ENCODE measurements at regions of chr6 and their contacts with region 1.

Region 1: GRCh38 chr6:31769684-31770371 is 7.3 kb downstream of the VWA7 start:
- DNase-seq: peak; percentile 75 to 81 (median 80)
- H3K4me3 ChIP-seq: no peak overlapping the region
- H3K4me3 Mint-ChIP-seq: peak overlapping the region in 2 of 8 donors; percentile 42 to 57
- H3K27ac ChIP-seq: no peak overlapping the region
- H3K27ac Mint-ChIP-seq: peak overlapping the region in 5 of 7 donors; percentile 0 to 65 (median 36)
- H3K4me1 ChIP-seq: peaks cover 35% of the 10 kb centered on the region
- H3K4me1 Mint-ChIP-seq: peaks cover 15 to 34% (median 24%) of the 10 kb centered on the region in 4 donors
- H3K27me3 ChIP-seq: no peaks in the 10 kb centered on the region
- H3K27me3 Mint-ChIP-seq: no peaks in the 10 kb centered on the region

Region 2: DNA sequence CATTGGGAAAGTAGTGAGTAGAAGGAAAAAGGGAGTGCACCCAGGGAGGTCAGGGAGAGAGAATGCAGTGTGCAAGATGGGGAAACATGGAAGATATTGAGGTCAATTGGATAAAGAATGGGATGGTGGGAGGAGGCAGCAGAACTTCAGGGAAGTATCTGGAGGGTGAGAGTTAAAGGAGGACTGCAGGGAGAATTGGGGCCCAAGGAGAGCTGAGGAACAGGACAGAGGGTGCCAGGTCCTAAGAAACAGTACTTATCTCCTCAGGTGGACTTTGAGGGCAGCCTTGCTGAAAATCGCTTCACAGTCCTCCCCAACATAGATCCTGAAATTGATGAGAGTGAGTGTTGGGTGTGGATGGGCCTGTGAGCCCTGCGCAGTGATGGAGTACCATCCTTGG is 11.5 kb before region 1 on chr6:
- CTCF ChIA-PET with region 1: interaction called, 11 read pairs
- POLR2A ChIA-PET with region 1: no interaction called
- intact Hi-C with region 1: no loop called
- DNase-seq: no peak
- H3K4me3 ChIP-seq: no peak overlapping the region
- H3K4me3 Mint-ChIP-seq: no peak overlapping the region
- H3K27ac ChIP-seq: no peak overlapping the region
- H3K27ac Mint-ChIP-seq: peak overlapping the region in 3 of 7 donors; percentile 10 to 72 (median 38)
- H3K4me1 ChIP-seq: no peaks in the 10 kb centered on the region
- H3K4me1 Mint-ChIP-seq: peaks cover 0 to 5% (median 0%) of the 10 kb centered on the region in 4 donors
- H3K27me3 ChIP-seq: no peaks in the 10 kb centered on the region
- H3K27me3 Mint-ChIP-seq: no peaks in the 10 kb centered on the region

Region 3: GRCh38 chr6:31785475-31785874 is 15.6 kb after region 1 on chr6:
- CTCF ChIA-PET with region 1: interaction called, 17 read pairs
- POLR2A ChIA-PET with region 1: interaction called, 7 read pairs
- intact Hi-C with region 1: no loop called
- DNase-seq: no peak
- H3K4me3 ChIP-seq: no peak overlapping the region
- H3K4me3 Mint-ChIP-seq: no peak overlapping the region
- H3K27ac ChIP-seq: no peak overlapping the region
- H3K27ac Mint-ChIP-seq: no peak overlapping the region
- H3K4me1 ChIP-seq: no peaks in the 10 kb centered on the region
- H3K4me1 Mint-ChIP-seq: peaks cover 1 to 4% (median 3%) of the 10 kb centered on the region in 4 donors
- H3K27me3 ChIP-seq: no peaks in the 10 kb centered on the region
- H3K27me3 Mint-ChIP-seq: no peaks in the 10 kb centered on the region

Region 4: DNA sequence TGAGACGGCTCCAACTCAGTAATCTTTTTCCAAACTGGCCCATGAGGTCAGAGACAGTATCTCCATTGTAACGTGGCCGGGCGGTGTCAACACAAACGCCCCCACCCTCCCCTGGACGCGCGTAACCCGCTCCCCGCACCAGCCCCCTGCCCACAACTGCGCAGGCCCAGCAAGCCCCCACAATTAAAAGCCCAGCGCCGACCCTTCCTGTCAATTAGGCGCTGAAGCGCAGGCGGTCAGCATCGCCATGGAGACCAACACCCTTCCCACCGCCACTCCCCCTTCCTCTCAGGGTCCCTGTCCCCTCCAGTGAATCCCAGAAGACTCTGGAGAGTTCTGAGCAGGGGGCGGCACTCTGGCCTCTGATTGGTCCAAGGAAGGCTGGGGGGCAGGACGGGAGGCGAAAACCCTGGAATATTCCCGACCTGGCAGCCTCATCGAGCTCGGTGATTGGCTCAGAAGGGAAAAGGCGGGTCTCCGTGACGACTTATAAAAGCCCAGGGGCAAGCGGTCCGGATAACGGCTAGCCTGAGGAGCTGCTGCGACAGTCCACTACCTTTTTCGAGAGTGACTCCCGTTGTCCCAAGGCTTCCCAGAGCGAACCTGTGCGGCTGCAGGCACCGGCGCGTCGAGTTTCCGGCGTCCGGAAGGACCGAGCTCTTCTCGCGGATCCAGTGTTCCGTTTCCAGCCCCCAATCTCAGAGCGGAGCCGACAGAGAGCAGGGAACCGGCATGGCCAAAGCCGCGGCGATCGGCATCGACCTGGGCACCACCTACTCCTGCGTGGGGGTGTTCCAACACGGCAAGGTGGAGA is 45.4 kb after region 1 on chr6 and contains the starts of genes HSPA1A and HSPA1L:
- CTCF ChIA-PET with region 1: interaction called, 9 read pairs
- POLR2A ChIA-PET with region 1: interaction called, 9 read pairs
- intact Hi-C with region 1: loop called (anchors 5 kb)
- DNase-seq: peak; percentile 38 to 69 (median 42)
- H3K4me3 ChIP-seq: peak within 1 kb of the TSS; percentile 81 to 97
- H3K4me3 Mint-ChIP-seq: peak within 1 kb of the TSS; percentile 91 to 96 (median 94)
- H3K27ac ChIP-seq: peak within 1 kb of the TSS; percentile 82
- H3K27ac Mint-ChIP-seq: peak within 1 kb of the TSS; percentile 88 to 95 (median 92)
- H3K4me1 ChIP-seq: peaks cover 50% of the 10 kb centered on the region
- H3K4me1 Mint-ChIP-seq: peaks cover 31 to 66% (median 46%) of the 10 kb centered on the region in 4 donors
- H3K27me3 ChIP-seq: no peaks in the 10 kb centered on the region
- H3K27me3 Mint-ChIP-seq: no peaks in the 10 kb centered on the region
- total RNA-seq, gene HSPA1A: 69.9 to 71.5 TPM
- total RNA-seq, gene HSPA1L: 8.2 to 8.3 TPM

Region 5: DNA sequence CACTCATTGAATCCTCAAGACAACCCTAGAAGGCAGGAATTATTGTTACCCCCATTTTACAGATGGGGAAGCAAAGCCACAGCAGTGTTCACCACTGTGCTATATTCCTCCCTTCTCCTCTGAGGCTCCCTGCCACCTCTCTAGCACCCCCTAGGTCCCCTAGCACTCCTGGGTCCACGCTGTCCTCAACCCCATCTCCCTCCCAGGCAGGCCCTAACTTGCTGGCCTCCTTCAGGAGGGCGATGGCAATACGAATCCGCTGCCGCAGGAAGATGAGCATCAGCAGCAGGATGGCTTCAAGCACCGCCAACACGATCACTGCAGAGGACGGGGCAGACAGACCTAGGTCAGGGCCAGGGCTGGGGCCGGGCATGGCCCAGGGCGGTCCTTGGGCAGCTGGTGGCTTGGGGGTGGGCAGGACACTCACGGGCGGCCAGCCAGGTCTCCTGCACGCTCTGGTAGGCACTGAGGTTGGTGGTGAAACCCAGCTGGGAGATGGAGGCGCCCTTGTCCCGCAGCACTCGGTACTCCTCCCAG is 100.6 kb after region 1 on chr6:
- CTCF ChIA-PET with region 1: no interaction called
- POLR2A ChIA-PET with region 1: no interaction called
- intact Hi-C with region 1: no loop called
- DNase-seq: no peak
- H3K4me3 ChIP-seq: no peak overlapping the region
- H3K4me3 Mint-ChIP-seq: no peak overlapping the region
- H3K27ac ChIP-seq: no peak overlapping the region
- H3K27ac Mint-ChIP-seq: no peak overlapping the region
- H3K4me1 ChIP-seq: no peaks in the 10 kb centered on the region
- H3K4me1 Mint-ChIP-seq: peaks cover 0 to 6% (median 3%) of the 10 kb centered on the region in 4 donors
- H3K27me3 ChIP-seq: no peaks in the 10 kb centered on the region
- H3K27me3 Mint-ChIP-seq: peaks cover 0 to 3% of the 10 kb centered on the region in 2 donors

Measured in CD4-positive, alpha-beta memory T cell (primary cell).